Ascending aorta (tissue), 2 donors: ENCODE measurements at regions of chr7 and their contacts with region 1.

Region 1: DNA sequence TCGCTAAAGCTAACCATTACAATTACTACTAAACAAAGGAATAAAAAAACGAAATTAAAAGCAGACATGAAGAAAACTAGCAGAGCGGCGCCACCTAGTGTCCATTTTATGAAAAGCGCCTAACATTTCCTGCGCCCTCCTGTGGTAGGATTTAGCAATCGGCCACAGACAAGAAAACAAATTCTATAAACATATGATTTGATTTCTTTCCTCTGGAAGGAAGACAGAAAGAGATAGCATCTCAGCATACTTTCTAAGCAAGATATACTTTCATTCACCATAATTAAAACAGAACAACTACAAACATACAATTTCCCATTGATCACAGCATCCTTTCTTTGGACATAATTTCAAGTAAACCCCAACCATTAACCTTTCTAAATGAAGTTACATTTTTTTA is 337.7 kb upstream of the NPVF start:
- DNase-seq: peak in 1 of 2 donors; percentile 73
- H3K4me3 ChIP-seq: no peak overlapping the region
- H3K27ac ChIP-seq: no peak overlapping the region
- H3K4me1 ChIP-seq: no peaks in the 10 kb centered on the region
- H3K27me3 ChIP-seq: no peaks in the 10 kb centered on the region
- CTCF ChIP-seq: peak; percentile 92 to 99 (median 99)

Region 2: DNA sequence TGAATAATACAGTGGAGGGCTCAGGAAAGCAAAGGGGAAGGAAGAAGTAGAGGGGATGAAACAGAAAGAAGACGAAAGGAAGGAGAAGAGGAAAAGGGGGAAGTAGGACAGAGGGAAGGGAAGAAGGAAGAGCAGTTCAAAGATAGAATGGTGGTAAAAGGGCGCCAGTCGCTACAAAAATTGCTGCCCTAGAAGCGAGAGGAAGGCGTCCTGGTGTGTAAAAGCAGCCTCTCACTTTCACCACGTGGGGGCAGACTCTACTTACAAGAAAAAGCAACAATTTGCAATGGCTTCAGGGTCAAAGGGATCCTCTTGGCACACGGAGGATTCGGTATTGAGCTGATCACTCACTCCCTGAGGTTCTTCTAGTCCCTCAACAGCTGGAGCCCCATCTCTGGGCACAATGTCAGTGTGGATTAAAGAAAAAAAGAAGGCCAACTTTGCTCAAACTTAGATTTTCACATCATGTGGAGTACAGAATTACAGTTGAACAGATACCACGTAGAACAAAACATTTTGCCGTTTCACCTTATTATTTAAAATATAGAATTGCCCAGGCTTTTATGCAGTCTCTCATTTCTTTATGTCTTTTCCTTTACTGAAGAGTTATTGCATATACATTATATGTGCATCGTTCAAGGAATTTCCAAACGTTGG is 306.2 kb before region 1 on chr7:
- intact Hi-C with region 1: loop called (anchors 1 kb)
- DNase-seq: peak; percentile 9 to 82
- H3K4me3 ChIP-seq: no peak overlapping the region
- H3K27ac ChIP-seq: no peak overlapping the region
- H3K4me1 ChIP-seq: peaks cover 0 to 3% of the 10 kb centered on the region in 2 donors
- H3K27me3 ChIP-seq: no peaks in the 10 kb centered on the region
- CTCF ChIP-seq: peak; percentile 59 to 74 (median 71)

Region 3: DNA sequence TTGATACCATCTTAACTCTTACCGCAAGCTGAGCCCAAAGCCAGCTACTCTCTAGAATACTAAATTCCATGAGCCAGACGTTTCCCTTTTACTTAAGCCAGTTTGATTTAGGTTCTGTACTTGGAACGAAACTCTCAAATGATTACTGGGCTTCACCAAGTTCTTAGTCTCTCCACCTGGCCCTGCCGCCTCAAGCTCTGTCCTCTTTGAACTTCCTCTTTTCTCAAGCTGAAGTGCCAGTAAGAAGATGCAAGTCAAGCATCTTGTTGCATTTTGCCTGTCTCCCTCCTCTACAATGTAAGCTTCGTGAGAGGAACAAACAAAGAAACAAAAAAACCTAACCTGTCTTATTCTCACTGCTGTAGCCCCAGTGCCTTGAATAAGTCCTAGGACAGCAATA is 20.6 kb after region 1 on chr7:
- intact Hi-C with region 1: no loop called
- DNase-seq: no peak
- H3K4me3 ChIP-seq: no peak overlapping the region
- H3K27ac ChIP-seq: no peak overlapping the region
- H3K4me1 ChIP-seq: no peaks in the 10 kb centered on the region
- H3K27me3 ChIP-seq: no peaks in the 10 kb centered on the region
- CTCF ChIP-seq: no peak

Region 4: DNA sequence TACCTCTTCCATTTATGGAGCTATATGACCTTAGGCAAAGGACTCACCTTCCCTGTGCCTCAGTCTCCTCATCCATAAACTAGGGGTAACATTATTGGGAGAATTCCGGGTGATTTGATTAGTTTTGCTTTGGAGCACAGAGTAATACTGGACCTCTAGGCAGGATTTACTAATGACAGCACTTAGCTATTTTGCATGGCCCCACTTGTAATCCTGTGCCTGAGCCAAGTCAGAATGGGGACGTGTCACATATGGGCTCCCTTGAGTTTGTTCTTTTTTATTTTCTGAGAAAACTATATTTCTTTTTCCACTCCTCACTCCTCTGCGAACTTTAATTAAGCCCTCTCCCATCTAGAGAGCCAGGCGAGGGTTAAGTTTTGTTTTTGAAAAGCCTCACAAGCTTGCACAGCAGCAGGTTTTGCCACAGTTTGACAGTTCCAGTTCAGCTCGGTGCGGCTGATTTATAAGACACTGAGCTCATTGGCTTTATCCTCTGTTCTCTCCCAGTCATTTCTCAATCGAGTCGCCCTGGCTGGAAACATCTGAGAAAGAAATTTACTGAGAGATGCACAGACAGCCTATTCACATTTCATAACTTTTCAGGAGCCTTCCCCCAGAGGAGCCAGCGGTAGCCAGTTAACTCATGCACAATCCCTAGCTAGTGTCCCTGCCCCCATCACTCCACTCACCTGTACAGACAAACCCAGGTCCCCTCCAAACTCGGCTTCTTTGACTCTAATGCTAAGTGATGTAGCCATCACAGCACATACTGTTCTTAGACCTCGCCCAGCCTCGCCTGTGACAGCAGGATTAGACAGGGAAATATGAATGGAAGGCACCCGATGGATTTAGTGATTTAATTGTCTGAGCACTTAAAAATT is 104.3 kb after region 1 on chr7:
- intact Hi-C with region 1: no loop called
- DNase-seq: no peak
- H3K4me3 ChIP-seq: no peak overlapping the region
- H3K27ac ChIP-seq: no peak overlapping the region
- H3K4me1 ChIP-seq: no peaks in the 10 kb centered on the region
- H3K27me3 ChIP-seq: no peaks in the 10 kb centered on the region
- CTCF ChIP-seq: no peak

Region 5: DNA sequence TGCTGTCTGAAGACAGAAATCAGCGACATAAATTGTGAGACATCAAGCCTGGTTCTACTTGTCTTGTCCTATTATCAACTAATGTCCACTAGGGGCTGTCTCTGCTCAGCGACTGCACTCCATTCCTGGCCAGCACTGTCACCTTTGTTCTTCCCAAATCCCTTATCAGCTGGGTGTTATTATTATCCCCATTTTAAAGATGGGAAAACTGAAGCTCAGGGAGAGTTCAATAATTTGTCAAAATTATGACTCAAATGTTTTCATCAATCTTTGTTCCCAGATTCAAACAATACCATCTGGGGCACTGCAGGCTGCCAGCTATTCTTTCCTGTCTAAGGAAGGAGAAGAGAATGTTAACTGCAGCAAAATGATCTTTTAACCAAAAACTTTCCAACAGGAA is 154.5 kb after region 1 on chr7:
- intact Hi-C with region 1: no loop called
- DNase-seq: no peak
- H3K4me3 ChIP-seq: no peak overlapping the region
- H3K27ac ChIP-seq: no peak overlapping the region
- H3K4me1 ChIP-seq: peaks cover 0 to 5% of the 10 kb centered on the region in 2 donors
- H3K27me3 ChIP-seq: no peaks in the 10 kb centered on the region
- CTCF ChIP-seq: peak in 1 of 3 experiments; percentile 28